Activated CD4-positive, alpha-beta T cell treated with anti-CD3 and anti-CD28 coated beads for 36 hours (primary cell): ENCODE measurements at regions of chr14 and their contacts with region 1.

Region 1: GRCh38 chr14:34931206-34931605 is 51.6 kb upstream of the SRP54 start:
- DNase-seq: peak; percentile 25
- ATAC-seq: peak; percentile 72
- H3K4me3 Mint-ChIP-seq: peak overlapping the region; percentile 47
- H3K27ac Mint-ChIP-seq: peak overlapping the region; percentile 100
- H3K4me1 Mint-ChIP-seq: peaks cover 44% of the 10 kb centered on the region
- H3K27me3 Mint-ChIP-seq: no peaks in the 10 kb centered on the region

Region 2: GRCh38 chr14:33871394-33871793 is 1059.8 kb before region 1 on chr14:
- CTCF ChIA-PET with region 1: no interaction called
- POLR2A ChIA-PET with region 1: no interaction called
- intact Hi-C with region 1: no loop called
- DNase-seq: no peak
- ATAC-seq: no peak
- H3K4me3 Mint-ChIP-seq: no peak overlapping the region
- H3K27ac Mint-ChIP-seq: no peak overlapping the region
- H3K4me1 Mint-ChIP-seq: no peaks in the 10 kb centered on the region
- H3K27me3 Mint-ChIP-seq: no peaks in the 10 kb centered on the region

Region 3: GRCh38 chr14:34614638-34615037 is 316.6 kb before region 1 on chr14:
- CTCF ChIA-PET with region 1: no interaction called
- POLR2A ChIA-PET with region 1: no interaction called
- intact Hi-C with region 1: no loop called
- DNase-seq: no peak
- ATAC-seq: no peak
- H3K4me3 Mint-ChIP-seq: no peak overlapping the region
- H3K27ac Mint-ChIP-seq: peak overlapping the region; percentile 55
- H3K4me1 Mint-ChIP-seq: peaks cover 28% of the 10 kb centered on the region
- H3K27me3 Mint-ChIP-seq: no peaks in the 10 kb centered on the region

Region 4: DNA sequence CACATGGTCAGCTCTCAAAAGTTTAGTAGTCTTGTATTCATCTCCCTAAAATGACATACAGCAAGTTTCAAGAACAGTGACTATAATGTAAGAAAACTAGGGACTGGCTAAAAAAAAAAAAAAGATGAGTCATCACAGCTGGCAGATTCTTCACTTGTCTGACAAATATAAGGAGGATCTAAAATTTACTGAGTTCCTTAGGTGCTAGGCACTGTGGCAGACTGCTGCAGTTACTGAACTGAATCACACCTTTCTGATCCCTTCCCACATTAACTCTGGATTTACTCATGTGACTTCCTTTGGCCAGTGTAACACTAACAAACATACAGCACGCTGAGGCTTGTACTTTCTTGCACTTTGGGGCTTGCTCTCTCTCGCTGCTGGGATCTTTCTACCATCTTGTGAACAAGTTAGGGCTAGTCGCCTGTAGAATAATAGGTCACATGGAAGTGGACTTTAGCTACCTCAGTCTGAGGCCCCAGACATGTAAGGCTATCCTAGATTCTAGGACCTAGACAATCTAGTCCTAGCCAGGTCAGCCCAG is 88.1 kb before region 1 on chr14:
- CTCF ChIA-PET with region 1: no interaction called
- POLR2A ChIA-PET with region 1: no interaction called
- intact Hi-C with region 1: loop called in 1 of 2 experiments (anchors 2 kb)
- DNase-seq: peak; percentile 54
- ATAC-seq: peak; percentile 98
- H3K4me3 Mint-ChIP-seq: no peak overlapping the region
- H3K27ac Mint-ChIP-seq: peak overlapping the region; percentile 74
- H3K4me1 Mint-ChIP-seq: peaks cover 25% of the 10 kb centered on the region
- H3K27me3 Mint-ChIP-seq: no peaks in the 10 kb centered on the region

Region 5: GRCh38 chr14:34966413-34966812 is 35.2 kb after region 1 on chr14:
- CTCF ChIA-PET with region 1: interaction called, 5 read pairs
- POLR2A ChIA-PET with region 1: no interaction called
- intact Hi-C with region 1: loop called in 1 of 2 experiments (anchors 5 kb)
- DNase-seq: peak; percentile 11
- ATAC-seq: peak; percentile 97
- H3K4me3 Mint-ChIP-seq: no peak overlapping the region
- H3K27ac Mint-ChIP-seq: no peak overlapping the region
- H3K4me1 Mint-ChIP-seq: peaks cover 25% of the 10 kb centered on the region
- H3K27me3 Mint-ChIP-seq: no peaks in the 10 kb centered on the region